A549 (cell line): ENCODE measurements at regions of chr14 and their contacts with region 1.

Region 1: DNA sequence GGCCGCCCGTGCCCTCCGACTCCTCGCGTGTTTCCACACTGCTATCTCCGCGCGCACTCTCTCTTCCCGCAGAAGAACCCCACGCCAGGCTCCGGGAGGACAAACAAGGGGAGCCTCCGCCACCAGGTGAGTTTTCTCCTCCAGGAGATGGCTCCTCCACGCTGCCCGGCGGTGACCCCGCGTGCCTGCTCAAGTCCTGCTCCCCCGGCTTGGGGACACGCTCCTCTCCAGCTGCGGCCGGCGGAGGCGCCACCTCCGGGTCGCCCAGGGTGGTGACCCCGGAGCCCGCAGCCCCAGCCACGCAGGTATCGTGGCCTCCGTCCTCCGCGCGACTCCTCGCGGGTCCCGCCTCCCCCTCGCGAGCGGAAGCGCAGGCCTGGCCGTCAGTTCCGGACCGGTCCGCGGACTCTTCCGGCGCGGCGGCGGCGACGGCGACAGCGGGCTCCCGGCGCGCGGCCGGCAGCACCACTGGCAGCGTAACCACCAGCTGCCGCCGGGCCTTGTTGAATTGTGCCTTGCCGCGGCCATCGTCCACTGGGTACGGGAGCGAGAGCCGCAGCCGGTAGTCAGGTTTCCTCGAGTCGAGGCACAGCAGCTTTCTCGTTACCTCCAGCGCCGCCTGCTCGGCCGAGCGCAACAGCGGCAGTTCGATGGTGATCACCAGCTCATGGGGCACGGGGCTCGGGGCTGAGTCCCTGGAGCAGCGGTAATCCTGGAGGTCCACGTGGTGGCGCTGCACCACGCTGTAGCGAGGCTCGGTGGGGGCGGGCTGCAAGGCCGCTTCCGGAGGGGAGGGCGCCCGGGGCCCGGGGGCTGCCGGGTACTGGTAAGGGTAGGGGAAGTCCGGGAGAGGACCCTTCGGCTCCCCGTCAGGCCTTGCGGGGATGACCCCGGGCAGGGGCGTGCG is 1.2 kb downstream of the DNAAF2 start:
- DNase-seq: peak; percentile 86 to 98
- ATAC-seq: peak; percentile 89 to 90
- H3K4me3 ChIP-seq: peak overlapping the region; percentile 78
- H3K27ac ChIP-seq: peak overlapping the region; percentile 92 to 94
- H3K4me1 ChIP-seq: peaks cover 22% of the 10 kb centered on the region; the same call in 2 of the 3 replicates
- CTCF ChIP-seq: peak; percentile 84
- EP300 ChIP-seq: no peak
- POLR2A ChIP-seq: peak; percentile 89
- RAD21 ChIP-seq: peak; percentile 74 to 81

Region 2: GRCh38 chr14:49585803-49586672 is 47.9 kb before region 1 on chr14 and contains the start of gene RPS29:
- CTCF ChIA-PET with region 1: interaction called, 8 read pairs
- POLR2A ChIA-PET with region 1: interaction called, 15 read pairs
- DNase-seq: peak; percentile 93 to 99
- ATAC-seq: peak; percentile 86 to 89
- H3K4me3 ChIP-seq: peak within 1 kb of the TSS; percentile 64
- H3K27ac ChIP-seq: peak within 1 kb of the TSS; percentile 86 to 96
- H3K4me1 ChIP-seq: peaks cover 30% of the 10 kb centered on the region
- CTCF ChIP-seq: no peak
- EP300 ChIP-seq: no peak
- POLR2A ChIP-seq: peak; percentile 78
- RAD21 ChIP-seq: no peak
- polyA plus RNA-seq, gene RPS29: 3,909 and 5,167 TPM in 2 replicates

Region 3: DNA sequence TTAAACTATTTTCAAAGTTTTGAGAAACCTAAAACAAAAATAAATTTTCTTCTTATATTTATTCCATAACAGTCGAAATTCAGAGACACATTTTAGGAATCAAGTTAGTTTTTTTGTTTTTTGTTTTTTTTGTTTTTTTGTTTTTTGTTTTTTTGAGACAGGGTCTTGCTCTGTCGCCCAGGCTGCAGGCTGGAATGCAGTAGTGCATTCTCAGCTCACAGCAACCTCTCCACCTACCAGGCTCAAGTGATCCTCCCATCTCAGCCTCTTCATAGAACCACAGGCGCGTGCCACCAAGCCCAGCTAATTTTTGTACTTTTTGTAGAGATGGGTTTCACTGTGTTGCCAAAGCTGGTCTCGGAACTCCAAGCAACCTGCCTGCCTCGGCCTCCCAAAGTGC is 19.6 kb after region 1 on chr14:
- CTCF ChIA-PET with region 1: interaction called, 16 read pairs
- POLR2A ChIA-PET with region 1: interaction called, 4 read pairs
- DNase-seq: no peak
- ATAC-seq: no peak
- H3K4me3 ChIP-seq: no peak overlapping the region
- H3K27ac ChIP-seq: no peak overlapping the region
- H3K4me1 ChIP-seq: peaks cover 9% of the 10 kb centered on the region; the same call in 1 of the 3 replicates
- CTCF ChIP-seq: no peak
- EP300 ChIP-seq: no peak
- POLR2A ChIP-seq: no peak
- RAD21 ChIP-seq: no peak

Region 4: DNA sequence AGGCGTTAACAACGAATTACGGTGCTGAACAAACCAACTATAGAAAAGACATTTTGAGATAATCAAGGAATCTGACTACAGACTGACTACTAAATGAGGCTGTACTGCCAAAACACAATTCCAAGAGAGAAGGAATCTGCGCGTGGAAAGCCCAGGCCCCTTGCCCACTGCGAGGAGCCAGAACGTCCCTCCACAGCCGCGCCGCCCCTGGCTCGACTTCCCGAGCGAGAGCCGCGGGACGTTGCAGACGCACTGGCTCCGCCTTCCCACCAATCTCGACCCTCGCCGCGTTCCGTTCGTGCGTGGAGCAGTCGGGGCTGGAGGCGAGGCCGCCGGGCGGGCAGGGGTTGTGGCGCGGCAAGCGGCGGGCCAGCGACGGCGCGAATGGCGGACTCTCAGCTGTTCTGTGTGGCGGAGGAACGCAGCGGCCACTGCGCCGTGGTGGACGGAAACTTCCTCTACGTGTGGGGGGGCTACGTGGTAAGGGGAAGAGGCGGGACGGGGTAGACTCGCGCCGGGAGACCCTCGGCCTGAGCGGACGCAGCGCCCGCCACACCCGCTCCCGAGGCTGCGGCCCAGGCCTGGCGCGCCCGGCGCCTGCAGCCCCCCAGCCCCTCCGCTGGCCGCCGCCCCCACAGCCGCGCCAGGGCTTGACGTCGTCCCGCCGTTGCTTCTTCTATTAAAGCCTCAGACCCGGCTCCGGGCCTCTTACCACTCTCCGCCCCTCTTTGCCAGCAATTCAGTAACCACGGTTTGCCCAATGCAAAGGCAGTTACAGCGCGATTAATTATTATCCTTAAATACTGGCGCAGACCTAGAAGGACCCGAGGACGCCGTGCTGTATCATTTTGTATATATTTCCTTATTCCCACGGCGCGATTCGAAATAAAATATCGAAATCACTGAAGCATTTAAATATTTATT is 59.2 kb after region 1 on chr14 and contains the start of gene KLHDC1:
- CTCF ChIA-PET with region 1: interaction called, 9 read pairs
- POLR2A ChIA-PET with region 1: interaction called, 11 read pairs
- DNase-seq: peak; percentile 49 to 78
- ATAC-seq: peak; percentile 76 to 80
- H3K4me3 ChIP-seq: peak within 1 kb of the TSS; percentile 53
- H3K27ac ChIP-seq: peak within 1 kb of the TSS; percentile 71 to 90
- H3K4me1 ChIP-seq: peaks cover 19% of the 10 kb centered on the region; the same call in 1 of the 3 replicates
- CTCF ChIP-seq: no peak
- EP300 ChIP-seq: no peak
- POLR2A ChIP-seq: peak; percentile 91
- RAD21 ChIP-seq: no peak
- polyA plus RNA-seq, gene KLHDC1: 0.70 and 0.74 TPM in 2 replicates

Region 5: GRCh38 chr14:49852301-49853157 is 218.6 kb after region 1 on chr14 and contains the start of gene NEMF:
- CTCF ChIA-PET with region 1: interaction called, 11 read pairs
- POLR2A ChIA-PET with region 1: interaction called, 7 read pairs
- DNase-seq: peak; percentile 89 to 92
- ATAC-seq: peak; percentile 91 to 95
- H3K4me3 ChIP-seq: peak within 1 kb of the TSS; percentile 97
- H3K27ac ChIP-seq: peak within 1 kb of the TSS; percentile 94 to 97
- H3K4me1 ChIP-seq: peaks cover 14% of the 10 kb centered on the region; the same call in 2 of the 3 replicates
- CTCF ChIP-seq: peak; percentile 97
- EP300 ChIP-seq: no peak
- POLR2A ChIP-seq: peak; percentile 85
- RAD21 ChIP-seq: peak; percentile 21 to 35; a peak in 2 of 5 replicates
- polyA plus RNA-seq, gene NEMF: 58.8 and 59.6 TPM in 2 replicates

Region 6: DNA sequence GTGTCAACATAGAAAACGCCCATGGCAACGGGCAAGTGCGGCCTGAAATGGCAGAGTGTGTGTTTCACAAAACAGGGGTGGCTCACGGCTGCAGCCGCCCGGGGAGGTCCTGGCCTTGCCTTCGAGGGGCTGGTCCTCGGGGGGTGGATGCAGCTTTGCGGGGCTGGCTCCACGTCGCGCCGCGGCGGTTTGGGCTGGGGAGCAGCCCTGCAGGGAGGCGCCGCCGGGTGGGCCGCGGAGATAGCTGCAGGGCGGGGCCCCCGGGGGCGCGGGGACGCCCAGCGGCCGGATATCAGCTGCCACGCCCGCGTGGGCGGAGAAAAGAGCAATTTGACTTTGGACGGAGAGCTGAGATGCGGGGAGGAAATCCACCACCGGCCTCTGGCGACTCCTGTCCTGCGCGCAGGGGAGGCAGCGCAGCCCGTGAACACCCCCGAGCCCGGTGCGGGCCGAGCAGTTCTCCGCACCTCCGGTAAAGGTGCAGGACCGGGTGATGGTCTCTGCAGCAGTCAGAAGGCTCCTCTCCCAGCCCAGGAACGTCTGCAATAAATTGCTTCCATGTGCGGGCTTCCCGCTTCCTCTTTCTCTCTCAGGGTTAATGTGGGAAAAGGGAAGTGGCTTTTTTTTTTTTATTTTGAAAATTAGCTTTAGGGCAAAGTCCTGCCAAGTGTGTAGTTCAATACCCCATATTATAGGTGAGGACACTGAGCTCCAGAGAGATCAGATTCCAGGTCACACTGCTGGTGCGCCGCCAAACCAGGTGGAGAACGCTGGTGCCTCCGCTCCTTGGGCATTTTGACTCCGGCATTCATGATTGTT is 369.5 kb after region 1 on chr14:
- CTCF ChIA-PET with region 1: no interaction called
- POLR2A ChIA-PET with region 1: no interaction called
- DNase-seq: peak; percentile 75 to 80
- ATAC-seq: peak; percentile 49 to 66
- H3K4me3 ChIP-seq: peak overlapping the region; percentile 48
- H3K27ac ChIP-seq: peak overlapping the region; percentile 90 to 94
- H3K4me1 ChIP-seq: peaks cover 64% of the 10 kb centered on the region
- CTCF ChIP-seq: no peak; the same call in 1 of the 3 replicates
- EP300 ChIP-seq: no peak
- POLR2A ChIP-seq: peak; percentile 66
- RAD21 ChIP-seq: peak; percentile 23 to 67